ENCODE measurements at regions of chr10 and their contacts with region 1.

Region 1: DNA sequence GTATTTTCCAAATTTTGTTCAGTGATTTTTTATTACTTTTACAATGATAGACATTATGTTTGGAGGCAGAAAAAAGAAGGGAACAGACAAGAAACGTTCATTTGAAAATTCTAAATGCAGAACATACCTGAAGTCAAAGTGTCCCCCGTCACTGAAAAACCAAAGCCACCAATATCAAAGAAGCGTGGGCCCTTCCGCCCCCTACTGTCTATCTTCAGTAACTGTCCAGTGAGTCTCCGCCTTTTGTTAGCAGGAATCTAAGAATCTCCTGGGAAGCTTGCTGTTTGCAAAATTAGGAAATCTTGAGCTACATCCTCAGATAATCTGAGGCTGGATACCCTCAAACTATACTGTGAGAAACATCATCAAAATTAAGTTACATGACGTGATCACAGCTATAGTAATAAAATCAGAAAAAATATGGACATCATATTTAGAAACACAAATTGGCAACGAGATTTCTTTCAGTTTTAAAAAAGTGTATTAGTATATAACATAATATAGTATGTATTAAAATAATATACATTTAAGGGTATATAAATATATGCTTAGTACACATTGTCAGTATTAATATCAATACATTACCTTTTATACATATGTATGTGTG is 169.3 kb upstream of the AKR1E2 start:
- DNase-seq: peak; percentile 33 to 70
- ATAC-seq: peak in 6 of 8 donors; percentile 50 to 72 (median 64)
- H3K4me3 ChIP-seq: no peak overlapping the region
- H3K27ac ChIP-seq: no peak overlapping the region
- H3K4me1 ChIP-seq: peaks cover 0 to 34% (median 10%) of the 10 kb centered on the region in 9 donors
- H3K27me3 ChIP-seq: no peaks in the 10 kb centered on the region
- CTCF ChIP-seq: peak; percentile 79 to 95 (median 93)

Region 2: DNA sequence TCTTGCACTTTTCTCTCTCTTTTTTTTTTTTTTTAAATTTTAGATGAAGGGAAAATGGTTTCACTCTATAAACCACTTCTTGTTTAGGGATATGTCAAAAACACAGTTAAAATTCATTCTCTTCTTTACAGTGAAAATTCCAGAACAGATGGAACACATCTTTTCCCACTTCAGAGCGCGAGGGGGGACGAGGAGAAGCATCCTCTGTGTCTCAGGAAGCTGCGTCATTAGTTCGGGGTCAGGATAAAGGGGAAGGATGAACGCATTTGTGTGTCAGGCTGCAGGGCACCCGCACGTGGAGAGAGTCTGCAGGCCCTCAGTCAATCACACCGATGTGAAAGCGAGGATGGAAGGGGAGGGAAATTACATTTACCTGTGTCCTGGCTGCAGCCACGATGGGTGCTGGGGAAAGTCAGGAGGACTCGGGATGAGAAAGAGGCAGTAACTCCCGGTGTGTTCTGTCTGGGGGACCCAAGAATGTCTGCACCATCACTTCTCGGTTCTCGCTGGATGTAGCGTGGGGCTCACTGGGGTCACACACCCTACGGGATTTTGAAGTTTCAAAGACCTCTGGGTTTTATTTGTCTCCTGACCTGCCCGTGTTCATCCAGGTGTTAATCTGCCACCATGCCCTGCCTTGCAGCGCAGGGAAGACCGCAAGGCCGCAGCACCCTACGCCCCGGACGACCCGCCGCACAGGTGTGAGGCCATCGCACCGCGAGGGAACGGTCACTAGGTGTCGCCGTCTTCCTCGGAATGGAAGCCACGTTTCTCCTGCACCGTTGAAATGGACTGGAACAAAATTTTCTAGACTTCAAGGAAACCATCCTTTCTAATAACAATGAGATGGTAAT is 1417.4 kb before region 1 on chr10:
- intact Hi-C with region 1: loop called in 6 of 10 experiments (anchors 5 to 10 kb)
- DNase-seq: peak; percentile 77 to 82
- ATAC-seq: peak; percentile 81 to 93 (median 88)
- H3K4me3 ChIP-seq: peak overlapping the region in 6 of 10 donors; percentile 23 to 36 (median 32)
- H3K27ac ChIP-seq: peak overlapping the region in 9 of 10 donors; percentile 11 to 84 (median 68)
- H3K4me1 ChIP-seq: peaks cover 0 to 26% (median 5%) of the 10 kb centered on the region in 9 donors
- H3K27me3 ChIP-seq: peaks cover 0 to 4% (median 0%) of the 10 kb centered on the region in 7 donors
- CTCF ChIP-seq: peak; percentile 85 to 98 (median 95)

Region 3: GRCh38 chr10:3924344-3924743 is 732.3 kb before region 1 on chr10:
- intact Hi-C with region 1: loop called in 1 of 10 experiments (anchors 10 kb)
- DNase-seq: no peak
- ATAC-seq: peak in 4 of 8 donors; percentile 17 to 71 (median 68)
- H3K4me3 ChIP-seq: no peak overlapping the region
- H3K27ac ChIP-seq: peak overlapping the region in 4 of 10 donors; percentile 13 to 56 (median 30)
- H3K4me1 ChIP-seq: peaks cover 0 to 41% (median 20%) of the 10 kb centered on the region in 9 donors
- H3K27me3 ChIP-seq: no peaks in the 10 kb centered on the region
- CTCF ChIP-seq: no peak

Region 4: GRCh38 chr10:4344511-4344994 is 312.1 kb before region 1 on chr10:
- intact Hi-C with region 1: loop called in 1 of 10 experiments (anchors 10 kb)
- DNase-seq: peak; percentile 39 to 72
- ATAC-seq: peak; percentile 78 to 99 (median 92)
- H3K4me3 ChIP-seq: peak overlapping the region in 1 of 10 donors; percentile 2
- H3K27ac ChIP-seq: peak overlapping the region; percentile 37 to 85 (median 68)
- H3K4me1 ChIP-seq: peaks cover 2 to 34% (median 24%) of the 10 kb centered on the region in 9 donors
- H3K27me3 ChIP-seq: no peaks in the 10 kb centered on the region
- CTCF ChIP-seq: peak in 4 of 9 donors; percentile 21 to 37 (median 34)

Region 5: GRCh38 chr10:4512671-4513240 is 143.9 kb before region 1 on chr10:
- intact Hi-C with region 1: loop called in 8 of 10 experiments (anchors 2 to 10 kb)
- DNase-seq: peak; percentile 40 to 58
- ATAC-seq: peak; percentile 49 to 94 (median 76)
- H3K4me3 ChIP-seq: no peak overlapping the region
- H3K27ac ChIP-seq: peak overlapping the region in 9 of 10 donors; percentile 2 to 90 (median 77)
- H3K4me1 ChIP-seq: peaks cover 0 to 48% (median 34%) of the 10 kb centered on the region in 9 donors
- H3K27me3 ChIP-seq: no peaks in the 10 kb centered on the region
- CTCF ChIP-seq: peak; percentile 21 to 71 (median 56)

Region 6: DNA sequence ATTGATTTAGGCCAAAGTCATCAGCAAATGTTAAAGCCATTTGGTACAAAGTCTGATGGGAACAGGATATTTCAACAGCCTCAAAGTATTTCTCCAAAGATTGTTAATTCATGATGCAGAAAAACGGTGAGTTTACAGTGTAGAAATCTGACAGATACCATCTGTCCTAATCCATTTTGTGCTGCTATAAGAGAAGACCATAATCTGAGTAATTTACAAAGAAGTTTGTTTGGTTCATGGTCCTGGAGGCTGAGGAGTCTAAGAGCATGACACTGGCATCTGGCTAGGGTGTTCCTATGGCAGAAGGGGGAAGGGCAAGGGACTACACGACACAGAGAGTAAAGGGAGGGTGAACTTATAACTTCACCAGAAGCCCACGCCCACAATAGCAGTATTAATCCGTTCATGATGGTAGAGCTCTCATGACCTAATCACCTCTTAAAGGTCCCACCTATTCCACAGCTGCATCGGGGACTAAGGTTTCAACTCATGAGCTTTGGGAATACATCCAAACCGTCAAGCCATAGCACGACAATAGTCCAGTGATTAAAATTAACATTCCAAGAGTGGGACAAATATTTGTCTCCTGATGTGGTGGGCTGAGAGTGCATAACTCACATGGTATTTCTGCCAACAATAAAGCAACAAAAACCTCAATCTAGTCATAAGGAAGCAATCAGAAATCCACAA is 129.3 kb before region 1 on chr10:
- intact Hi-C with region 1: no loop called
- DNase-seq: no peak
- ATAC-seq: no peak
- H3K4me3 ChIP-seq: no peak overlapping the region
- H3K27ac ChIP-seq: peak overlapping the region in 1 of 10 donors; percentile 38
- H3K4me1 ChIP-seq: peaks cover 0 to 28% (median 4%) of the 10 kb centered on the region in 9 donors
- H3K27me3 ChIP-seq: no peaks in the 10 kb centered on the region
- CTCF ChIP-seq: no peak